Activated B cell treated with CpG ODN at 0.5 μM for 24 hours (primary cell): ENCODE measurements at regions of chr1 and their contacts with region 1.

Region 1: GRCh38 chr1:150561974-150562445 is 12.8 kb downstream of the ADAMTSL4 start:
- DNase-seq: peak; percentile 79
- ATAC-seq: peak; percentile 43
- H3K4me3 Mint-ChIP-seq: peak overlapping the region; percentile 96
- H3K27ac Mint-ChIP-seq: peak overlapping the region; percentile 98
- H3K4me1 Mint-ChIP-seq: peaks cover 63% of the 10 kb centered on the region
- H3K27me3 Mint-ChIP-seq: no peaks in the 10 kb centered on the region
- CTCF ChIP-seq: no peak

Region 2: DNA sequence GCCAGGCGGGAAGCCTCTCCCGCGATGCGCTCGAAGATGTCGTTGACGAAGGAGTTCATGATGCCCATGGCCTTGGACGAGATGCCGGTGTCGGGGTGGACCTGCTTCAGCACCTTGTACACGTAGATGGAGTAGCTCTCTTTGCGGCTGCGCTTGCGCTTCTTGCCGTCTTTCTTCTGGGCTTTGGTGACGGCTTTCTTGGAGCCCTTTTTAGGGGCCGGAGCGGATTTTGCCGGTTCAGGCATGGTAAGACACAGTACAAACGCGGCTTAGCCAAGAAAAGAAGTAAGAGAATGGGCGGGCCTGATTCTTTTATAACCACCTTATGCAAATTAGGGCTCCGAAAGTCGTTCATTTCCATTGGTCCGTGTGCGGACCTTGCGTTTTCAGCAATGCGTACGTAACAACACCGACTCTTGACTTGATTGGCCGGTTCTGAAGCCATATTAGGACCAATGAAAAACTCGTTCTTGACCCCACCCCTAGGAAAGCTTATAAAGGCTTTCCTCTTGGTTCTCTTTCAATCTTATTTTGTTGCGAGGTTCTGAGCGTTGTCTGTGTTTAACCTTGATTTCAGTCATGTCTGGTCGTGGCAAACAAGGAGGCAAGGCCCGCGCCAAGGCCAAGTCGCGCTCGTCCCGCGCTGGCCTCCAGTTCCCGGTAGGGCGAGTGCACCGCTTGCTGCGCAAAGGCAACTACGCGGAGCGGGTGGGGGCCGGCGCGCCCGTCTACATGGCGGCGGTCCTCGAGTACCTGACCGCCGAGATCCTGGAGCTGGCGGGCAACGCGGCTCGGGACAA is 675.4 kb before region 1 on chr1:
- CTCF ChIA-PET with region 1: no interaction called
- POLR2A ChIA-PET with region 1: interaction called, 23 read pairs
- intact Hi-C with region 1: no loop called
- DNase-seq: peak; percentile 74
- ATAC-seq: peak; percentile 69
- H3K4me3 Mint-ChIP-seq: no peak overlapping the region
- H3K27ac Mint-ChIP-seq: no peak overlapping the region
- H3K4me1 Mint-ChIP-seq: peaks cover 2% of the 10 kb centered on the region
- H3K27me3 Mint-ChIP-seq: no peaks in the 10 kb centered on the region
- CTCF ChIP-seq: no peak

Region 3: DNA sequence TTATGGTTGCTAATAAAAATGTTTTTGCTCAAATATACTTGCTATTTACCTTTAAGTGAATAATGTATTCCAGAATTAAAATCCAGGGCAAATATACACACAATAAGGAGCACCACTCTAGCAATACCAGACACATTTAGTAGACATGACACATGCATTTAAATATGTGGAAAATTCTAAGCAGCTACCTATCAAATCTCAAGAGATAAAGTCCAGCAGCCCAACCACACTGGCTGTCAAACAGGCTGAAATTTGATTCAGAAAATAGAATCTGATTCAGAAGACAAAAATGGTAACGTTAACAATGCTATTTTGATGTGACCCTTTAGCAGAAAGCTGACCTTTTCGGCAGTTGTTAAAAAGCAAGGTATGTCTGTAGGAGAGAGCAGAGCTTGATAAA is 370.0 kb before region 1 on chr1:
- CTCF ChIA-PET with region 1: no interaction called
- POLR2A ChIA-PET with region 1: no interaction called
- intact Hi-C with region 1: no loop called
- DNase-seq: no peak
- ATAC-seq: no peak
- H3K4me3 Mint-ChIP-seq: no peak overlapping the region
- H3K27ac Mint-ChIP-seq: no peak overlapping the region
- H3K4me1 Mint-ChIP-seq: peaks cover 5% of the 10 kb centered on the region
- H3K27me3 Mint-ChIP-seq: peaks cover 6% of the 10 kb centered on the region
- CTCF ChIP-seq: no peak

Region 4: GRCh38 chr1:150548632-150549495 is 13.1 kb before region 1 on chr1 and contains the start of gene ADAMTSL4:
- CTCF ChIA-PET with region 1: interaction called, 10 read pairs
- POLR2A ChIA-PET with region 1: interaction called, 11 read pairs
- intact Hi-C with region 1: no loop called
- DNase-seq: peak; percentile 57
- ATAC-seq: peak; percentile 76
- H3K4me3 Mint-ChIP-seq: peak within 1 kb of the TSS; percentile 81
- H3K27ac Mint-ChIP-seq: no peak within 1 kb of the TSS
- H3K4me1 Mint-ChIP-seq: peaks cover 24% of the 10 kb centered on the region
- H3K27me3 Mint-ChIP-seq: peaks cover 21% of the 10 kb centered on the region
- CTCF ChIP-seq: no peak
- total RNA-seq, gene ADAMTSL4: 0.11 TPM in 1 of 2 replicates, not detected in the other

Region 5: DNA sequence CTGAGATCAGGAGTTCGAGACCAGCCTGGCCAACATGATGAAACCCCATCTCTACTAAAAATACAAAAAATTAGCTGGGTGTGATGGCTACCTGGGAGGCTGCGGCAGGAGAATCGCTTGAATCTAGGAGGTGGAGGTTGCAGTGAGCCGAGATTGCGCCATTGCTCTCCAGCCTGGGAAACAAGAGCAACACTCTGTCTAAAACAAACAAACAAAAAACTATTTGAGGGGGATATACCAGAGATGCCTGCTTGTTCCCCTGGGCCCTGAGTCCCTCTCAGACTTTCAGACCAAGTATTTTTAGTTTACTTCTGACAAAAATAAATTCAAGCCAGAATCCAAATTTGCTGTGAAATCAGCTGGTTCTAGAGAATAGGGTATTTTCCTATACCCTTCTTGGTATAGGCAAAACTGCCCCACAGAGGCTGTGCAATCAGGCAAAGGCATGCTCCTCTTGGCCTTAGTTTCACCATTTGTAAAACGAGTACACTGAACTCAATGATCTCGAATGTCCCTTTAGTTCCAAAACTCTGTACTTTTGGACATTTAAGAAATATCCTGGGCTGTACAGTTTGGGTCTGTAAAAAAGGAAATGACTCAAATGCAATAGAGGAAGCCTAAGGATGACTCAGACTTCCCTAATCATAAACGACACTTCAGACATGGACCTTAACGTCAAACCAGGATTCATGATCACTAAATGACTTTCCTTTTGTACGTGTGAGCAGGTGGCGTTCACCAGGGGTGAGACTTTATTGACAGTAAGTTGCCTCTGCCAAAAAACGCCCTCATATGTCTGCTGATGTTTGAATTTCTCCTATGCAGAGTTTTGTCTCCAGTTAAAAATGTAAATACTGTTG is 51.3 kb after region 1 on chr1:
- CTCF ChIA-PET with region 1: interaction called, 358 read pairs
- POLR2A ChIA-PET with region 1: interaction called, 272 read pairs
- intact Hi-C with region 1: loop called (anchors 1 kb)
- DNase-seq: no peak
- ATAC-seq: peak; percentile 53
- H3K4me3 Mint-ChIP-seq: peak overlapping the region; percentile 65
- H3K27ac Mint-ChIP-seq: peak overlapping the region; percentile 96
- H3K4me1 Mint-ChIP-seq: peaks cover 51% of the 10 kb centered on the region
- H3K27me3 Mint-ChIP-seq: no peaks in the 10 kb centered on the region
- CTCF ChIP-seq: no peak

Region 6: GRCh38 chr1:150650199-150650598 is 88.2 kb after region 1 on chr1:
- CTCF ChIA-PET with region 1: interaction called, 3 read pairs
- POLR2A ChIA-PET with region 1: interaction called, 15 read pairs
- intact Hi-C with region 1: no loop called
- DNase-seq: no peak
- ATAC-seq: no peak
- H3K4me3 Mint-ChIP-seq: no peak overlapping the region
- H3K27ac Mint-ChIP-seq: no peak overlapping the region
- H3K4me1 Mint-ChIP-seq: no peaks in the 10 kb centered on the region
- H3K27me3 Mint-ChIP-seq: no peaks in the 10 kb centered on the region
- CTCF ChIP-seq: no peak

Region 7: GRCh38 chr1:150876119-150876454 is 314.1 kb after region 1 on chr1:
- CTCF ChIA-PET with region 1: no interaction called
- POLR2A ChIA-PET with region 1: no interaction called
- intact Hi-C with region 1: loop called (anchors 1 kb)
- DNase-seq: no peak
- ATAC-seq: peak; percentile 32
- H3K4me3 Mint-ChIP-seq: peak overlapping the region; percentile 92
- H3K27ac Mint-ChIP-seq: peak overlapping the region; percentile 88
- H3K4me1 Mint-ChIP-seq: peaks cover 31% of the 10 kb centered on the region
- H3K27me3 Mint-ChIP-seq: no peaks in the 10 kb centered on the region
- CTCF ChIP-seq: no peak